GM12878 (cell line): ENCODE measurements at regions of chr20 and their contacts with region 1.

Region 1: GRCh38 chr20:11274141-11274594 is 600.4 kb upstream of the JAG1 start:
- DNase-seq: no peak
- ATAC-seq: peak; percentile 94
- H3K4me3 ChIP-seq: no peak overlapping the region
- H3K27ac ChIP-seq: no peak overlapping the region
- H3K4me1 ChIP-seq: no peaks in the 10 kb centered on the region; the same call in 1 of the 2 replicates
- H3K27me3 ChIP-seq: no peaks in the 10 kb centered on the region
- CTCF ChIP-seq: peak; percentile 51 to 84 (median 54); a peak in 5 of 6 replicates
- EP300 ChIP-seq: no peak
- POLR2A ChIP-seq: no peak
- RAD21 ChIP-seq: peak; percentile 94

Region 2: GRCh38 chr20:10611357-10611756 is 662.8 kb before region 1 on chr20:
- CTCF ChIA-PET with region 1: no interaction called
- POLR2A ChIA-PET with region 1: no interaction called
- RAD21 ChIA-PET with region 1: no interaction called
- SMC1A ChIA-PET with region 1: interaction called, 3 read pairs
- in situ Hi-C with region 1: no loop called
- intact Hi-C with region 1: loop called (anchors 1 kb)
- DNase-seq: no peak
- ATAC-seq: peak; percentile 87
- H3K4me3 ChIP-seq: no peak overlapping the region
- H3K27ac ChIP-seq: no peak overlapping the region
- H3K4me1 ChIP-seq: no peaks in the 10 kb centered on the region
- H3K27me3 ChIP-seq: no peaks in the 10 kb centered on the region
- CTCF ChIP-seq: peak; percentile 45 to 56 (median 47)
- EP300 ChIP-seq: no peak
- POLR2A ChIP-seq: no peak
- RAD21 ChIP-seq: peak; percentile 40

Region 3: GRCh38 chr20:10864076-10864918 is 409.9 kb before region 1 on chr20:
- CTCF ChIA-PET with region 1: no interaction called
- POLR2A ChIA-PET with region 1: no interaction called
- RAD21 ChIA-PET with region 1: no interaction called
- SMC1A ChIA-PET with region 1: no interaction called
- in situ Hi-C with region 1: no loop called
- intact Hi-C with region 1: loop called (anchors 10 kb)
- DNase-seq: no peak
- ATAC-seq: no peak
- H3K4me3 ChIP-seq: no peak overlapping the region
- H3K27ac ChIP-seq: no peak overlapping the region
- H3K4me1 ChIP-seq: no peaks in the 10 kb centered on the region
- H3K27me3 ChIP-seq: no peaks in the 10 kb centered on the region
- CTCF ChIP-seq: no peak
- EP300 ChIP-seq: no peak
- POLR2A ChIP-seq: no peak
- RAD21 ChIP-seq: no peak

Region 4: DNA sequence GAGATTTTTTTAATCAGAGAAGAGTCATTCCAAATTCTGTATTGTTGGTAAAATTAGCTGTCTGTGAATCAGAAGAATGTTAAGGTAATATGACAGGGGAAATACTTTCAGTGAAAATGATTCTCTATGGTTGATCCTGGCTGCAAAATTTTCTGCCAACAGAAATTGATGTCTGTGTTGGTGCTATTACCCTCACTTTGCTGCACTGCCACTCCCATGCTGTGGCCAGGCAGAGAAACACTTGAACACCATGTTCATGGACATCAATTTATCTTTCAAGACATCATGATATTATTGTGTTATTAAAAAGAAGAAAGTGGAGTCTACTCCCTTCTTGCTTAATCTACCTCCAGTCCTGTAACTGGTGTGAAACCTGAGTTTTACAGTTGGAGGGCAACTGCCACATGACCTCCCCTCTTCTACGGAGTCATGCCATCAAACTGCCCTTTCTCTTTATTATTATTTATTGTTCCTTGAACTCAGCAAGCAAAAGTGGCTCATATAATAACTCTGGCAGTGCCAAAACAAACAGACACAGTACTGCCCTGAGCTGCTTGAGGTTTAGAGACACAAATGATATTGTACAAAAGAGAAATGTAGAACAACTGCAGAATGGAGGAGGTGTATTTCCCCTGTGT is 312.4 kb before region 1 on chr20:
- CTCF ChIA-PET with region 1: no interaction called
- POLR2A ChIA-PET with region 1: no interaction called
- RAD21 ChIA-PET with region 1: no interaction called
- SMC1A ChIA-PET with region 1: no interaction called
- in situ Hi-C with region 1: no loop called
- intact Hi-C with region 1: no loop called
- DNase-seq: no peak
- ATAC-seq: no peak
- H3K4me3 ChIP-seq: no peak overlapping the region
- H3K27ac ChIP-seq: no peak overlapping the region
- H3K4me1 ChIP-seq: no peaks in the 10 kb centered on the region
- H3K27me3 ChIP-seq: no peaks in the 10 kb centered on the region
- CTCF ChIP-seq: no peak
- EP300 ChIP-seq: no peak
- POLR2A ChIP-seq: no peak
- RAD21 ChIP-seq: no peak

Region 5: GRCh38 chr20:11323816-11324215 is 49.6 kb after region 1 on chr20:
- CTCF ChIA-PET with region 1: no interaction called
- POLR2A ChIA-PET with region 1: no interaction called
- RAD21 ChIA-PET with region 1: no interaction called
- SMC1A ChIA-PET with region 1: no interaction called
- in situ Hi-C with region 1: no loop called
- intact Hi-C with region 1: no loop called
- DNase-seq: no peak
- ATAC-seq: no peak
- H3K4me3 ChIP-seq: no peak overlapping the region
- H3K27ac ChIP-seq: no peak overlapping the region
- H3K4me1 ChIP-seq: no peaks in the 10 kb centered on the region
- H3K27me3 ChIP-seq: no peaks in the 10 kb centered on the region
- CTCF ChIP-seq: no peak
- EP300 ChIP-seq: no peak
- POLR2A ChIP-seq: no peak
- RAD21 ChIP-seq: no peak